ENCODE measurements at regions of chr1 and their contacts with region 1.

Region 1: DNA sequence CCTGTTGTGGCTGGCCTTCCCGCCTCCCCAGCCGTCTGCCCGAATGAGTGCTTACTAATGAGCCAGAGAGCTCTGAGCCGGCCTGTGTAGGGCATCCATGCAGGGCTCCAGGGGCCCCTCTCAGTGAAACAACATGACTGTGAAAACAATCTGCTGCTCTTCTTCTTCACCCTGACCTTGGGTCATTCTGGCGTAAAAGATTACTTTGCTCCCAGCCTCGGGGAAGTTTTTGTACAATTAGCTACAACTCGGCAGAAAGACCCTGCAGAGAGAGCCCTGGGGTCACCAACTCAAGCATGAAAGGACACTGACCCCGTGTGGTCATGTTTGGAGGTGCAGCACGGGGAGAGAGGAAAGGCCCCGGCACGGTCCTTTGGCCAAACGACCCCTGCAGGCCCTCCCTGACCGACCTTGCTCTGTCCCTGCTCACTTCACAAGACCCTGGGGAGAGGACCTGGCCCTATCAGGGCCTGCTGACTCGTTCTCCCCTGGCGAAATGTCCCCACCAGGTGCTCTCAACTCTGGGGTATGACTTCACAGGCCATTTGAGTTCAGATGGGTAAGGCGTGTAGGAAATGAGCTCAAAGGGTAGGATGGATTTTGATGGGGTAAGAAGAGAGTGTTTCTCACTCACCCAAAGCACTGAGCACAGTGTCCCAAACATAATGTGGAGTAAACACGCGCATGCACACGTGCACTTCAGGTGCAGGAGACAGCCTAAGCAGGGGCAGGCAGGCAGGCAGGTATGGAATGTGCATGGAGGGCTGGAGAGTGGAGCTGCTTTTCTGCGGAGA is 22.9 kb upstream of the FAM20B start:
- DNase-seq: peak; percentile 58 to 86
- ATAC-seq: peak; percentile 86

Region 2: DNA sequence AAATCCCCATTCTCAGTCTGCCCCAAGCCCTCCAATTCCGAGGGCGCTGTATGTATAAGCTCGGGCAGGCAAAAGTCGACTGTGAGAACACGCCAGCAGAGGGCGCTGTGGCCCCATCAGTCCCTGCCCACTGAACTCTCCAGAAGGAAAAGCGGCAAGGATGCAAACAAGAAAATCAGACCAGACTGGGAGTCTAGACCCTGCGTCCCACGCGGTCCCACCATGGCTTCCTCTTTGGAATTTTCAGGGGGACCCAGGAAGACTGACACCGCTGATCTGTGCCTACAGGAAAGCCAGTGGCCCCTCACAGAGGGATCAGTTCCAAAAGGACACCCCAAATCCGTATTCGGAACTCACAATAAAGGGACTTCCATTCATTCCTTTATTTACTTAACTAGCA is 470.4 kb before region 1 on chr1:
- intact Hi-C with region 1: loop called (anchors 5 to 10 kb)
- DNase-seq: peak; percentile 71 to 91
- ATAC-seq: peak; percentile 64

Region 3: GRCh38 chr1:178774263-178774662 is 228.5 kb before region 1 on chr1:
- intact Hi-C with region 1: loop called in 1 of 2 experiments (anchors 5 kb)
- DNase-seq: no peak
- ATAC-seq: no peak

Region 4: DNA sequence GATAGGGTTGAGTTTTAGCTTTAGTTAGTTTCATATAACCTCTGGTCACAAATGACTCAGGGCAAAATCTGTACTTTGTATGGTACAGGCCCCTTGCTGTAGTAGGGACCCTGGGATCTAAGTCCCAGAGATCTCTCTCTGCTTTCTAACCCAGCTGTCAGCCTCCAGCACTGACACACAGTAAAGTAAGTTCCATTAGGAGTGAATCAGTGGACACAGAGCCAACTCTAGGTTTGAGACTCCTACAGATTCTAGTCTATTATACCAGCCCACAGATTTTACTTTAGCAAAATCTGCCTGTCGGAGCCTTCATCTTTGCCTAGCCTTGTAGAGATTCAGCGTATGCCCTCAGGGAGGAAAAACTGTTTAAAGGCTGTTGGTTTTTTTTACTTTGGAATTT is 184.3 kb before region 1 on chr1:
- intact Hi-C with region 1: loop called in 1 of 2 experiments (anchors 10 kb)
- DNase-seq: no peak
- ATAC-seq: no peak